Activated T-helper 1 cell treated with anti-CD3 and anti-CD28 coated beads, Interleukin-12 subunit alpha, Interleukin-12 subunit beta, Interleukin-2, Interleukin-4 antibody, amounts not matched to agents 30 ng/mL and 10 ng/mL and 1 ng/mL, durations not matched to agents 14 hours and 24 hours and 36 hours (primary cell): ENCODE measurements at regions of chr11 and their contacts with region 1.

Region 1: GRCh38 chr11:57131080-57131790 is 50.5 kb upstream of the LRRC55 start:
- DNase-seq: no peak
- H3K4me3 Mint-ChIP-seq: no peak overlapping the region
- H3K27ac Mint-ChIP-seq: no peak overlapping the region
- H3K4me1 Mint-ChIP-seq: no peaks in the 10 kb centered on the region
- H3K27me3 Mint-ChIP-seq: peaks cover 5% of the 10 kb centered on the region

Region 2: GRCh38 chr11:57072640-57073039 is 58.6 kb before region 1 on chr11:
- intact Hi-C with region 1: loop called (anchors 10 kb)
- DNase-seq: no peak
- H3K4me3 Mint-ChIP-seq: no peak overlapping the region
- H3K27ac Mint-ChIP-seq: no peak overlapping the region
- H3K4me1 Mint-ChIP-seq: no peaks in the 10 kb centered on the region
- H3K27me3 Mint-ChIP-seq: no peaks in the 10 kb centered on the region

Region 3: GRCh38 chr11:57460022-57460757 is 329.0 kb after region 1 on chr11 and contains the start of gene RTN4RL2:
- intact Hi-C with region 1: no loop called
- DNase-seq: no peak
- H3K4me3 Mint-ChIP-seq: peak within 1 kb of the TSS; percentile 82
- H3K27ac Mint-ChIP-seq: no peak within 1 kb of the TSS
- H3K4me1 Mint-ChIP-seq: peaks cover 41% of the 10 kb centered on the region
- H3K27me3 Mint-ChIP-seq: peaks cover 60% of the 10 kb centered on the region
- total RNA-seq, gene RTN4RL2: 0.54 TPM in 1 of 2 replicates, not detected in the other

Region 4: GRCh38 chr11:57530596-57531507 is 399.6 kb after region 1 on chr11 and contains the start of gene TIMM10:
- intact Hi-C with region 1: no loop called
- DNase-seq: peak; percentile 92
- H3K4me3 Mint-ChIP-seq: peak within 1 kb of the TSS; percentile 87
- H3K27ac Mint-ChIP-seq: peak within 1 kb of the TSS; percentile 87
- H3K4me1 Mint-ChIP-seq: peaks cover 32% of the 10 kb centered on the region
- H3K27me3 Mint-ChIP-seq: no peaks in the 10 kb centered on the region
- total RNA-seq, gene TIMM10: 98.2 and 99.6 TPM in 2 replicates

Region 5: DNA sequence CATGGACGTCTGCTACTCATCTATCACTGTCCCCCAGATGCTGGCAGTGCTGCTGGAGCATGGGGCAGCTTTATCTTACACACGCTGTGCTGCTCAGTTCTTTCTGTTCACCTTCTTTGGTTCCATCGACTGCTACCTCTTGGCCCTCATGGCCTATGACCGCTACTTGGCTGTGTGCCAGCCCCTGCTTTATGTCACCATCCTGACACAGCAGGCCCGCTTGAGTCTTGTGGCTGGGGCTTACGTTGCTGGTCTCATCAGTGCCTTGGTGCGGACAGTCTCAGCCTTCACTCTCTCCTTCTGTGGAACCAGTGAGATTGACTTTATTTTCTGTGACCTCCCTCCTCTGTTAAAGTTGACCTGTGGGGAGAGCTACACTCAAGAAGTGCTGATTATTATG is 1048.4 kb after region 1 on chr11:
- intact Hi-C with region 1: no loop called
- DNase-seq: no peak
- H3K4me3 Mint-ChIP-seq: no peak overlapping the region
- H3K27ac Mint-ChIP-seq: no peak overlapping the region
- H3K4me1 Mint-ChIP-seq: no peaks in the 10 kb centered on the region
- H3K27me3 Mint-ChIP-seq: no peaks in the 10 kb centered on the region